ENCODE measurements at regions of chr10 and their contacts with region 1.

Region 1: GRCh38 chr10:88386821-88387773 is 196.0 kb downstream of the RNLS start:
- DNase-seq: peak in 1 of 2 donors; percentile 71
- H3K4me3 ChIP-seq: peak overlapping the region; percentile 48 to 49
- H3K27ac ChIP-seq: peak overlapping the region; percentile 73 to 78
- H3K4me1 ChIP-seq: peaks cover 7 to 9% of the 10 kb centered on the region in 2 donors
- H3K27me3 ChIP-seq: no peaks in the 10 kb centered on the region
- CTCF ChIP-seq: no peak

Region 2: DNA sequence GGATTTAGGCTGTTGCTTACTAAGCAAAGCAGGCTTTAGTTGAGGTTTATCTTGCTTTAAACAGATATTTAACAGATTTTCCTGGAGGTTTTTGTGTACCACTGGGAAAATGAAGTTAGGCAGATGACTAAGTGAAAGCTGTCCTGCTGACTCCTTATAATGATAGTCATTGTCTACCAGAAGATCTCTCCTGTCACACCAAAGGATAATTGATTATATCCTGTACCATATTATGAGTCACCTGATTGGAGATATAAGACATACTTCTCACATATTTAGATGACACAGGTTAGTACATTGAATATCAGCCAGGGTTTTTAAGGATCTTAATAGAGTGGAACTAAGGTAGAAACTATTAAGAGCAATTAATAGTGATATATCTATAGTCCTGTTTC is 455.3 kb before region 1 on chr10:
- intact Hi-C with region 1: loop called (anchors 10 kb)
- DNase-seq: no peak
- H3K4me3 ChIP-seq: no peak overlapping the region
- H3K27ac ChIP-seq: peak overlapping the region; percentile 44 to 46
- H3K4me1 ChIP-seq: peaks cover 10 to 37% of the 10 kb centered on the region in 2 donors
- H3K27me3 ChIP-seq: no peaks in the 10 kb centered on the region
- CTCF ChIP-seq: no peak

Region 3: GRCh38 chr10:88114368-88114767 is 272.7 kb before region 1 on chr10:
- intact Hi-C with region 1: loop called (anchors 5 kb)
- DNase-seq: no peak
- H3K4me3 ChIP-seq: no peak overlapping the region
- H3K27ac ChIP-seq: no peak overlapping the region
- H3K4me1 ChIP-seq: peaks cover 4 to 11% of the 10 kb centered on the region in 2 donors
- H3K27me3 ChIP-seq: no peaks in the 10 kb centered on the region
- CTCF ChIP-seq: peak; percentile 15 to 55 (median 46)